ENCODE measurements at regions of chr3 and their contacts with region 1.

Region 1: DNA sequence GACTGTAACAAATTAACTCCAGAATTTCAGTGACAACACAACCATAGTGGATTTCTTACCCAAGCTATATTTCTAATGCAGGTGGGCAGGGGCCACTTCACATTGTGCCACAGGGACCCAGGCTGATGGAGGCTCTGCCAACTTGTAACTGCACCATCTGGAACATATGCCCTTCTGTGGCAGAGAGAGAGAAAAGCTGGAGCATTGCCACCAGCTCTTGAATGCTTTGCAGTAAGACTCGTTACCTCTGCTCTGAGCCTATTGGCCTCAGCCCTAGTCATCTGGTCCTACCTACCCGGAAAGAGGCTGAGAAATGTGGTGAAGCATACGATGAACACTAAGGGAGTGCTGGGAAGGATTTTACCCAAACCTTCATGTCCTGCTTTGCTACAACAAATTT is 587.1 kb downstream of the ZNF385D start:
- DNase-seq: no peak
- ATAC-seq: no peak
- H3K4me3 ChIP-seq: no peak overlapping the region
- H3K27ac ChIP-seq: no peak overlapping the region
- H3K4me1 ChIP-seq: no peaks in the 10 kb centered on the region
- H3K27me3 ChIP-seq: no peaks in the 10 kb centered on the region
- CTCF ChIP-seq: no peak

Region 2: GRCh38 chr3:21117370-21117769 is 46.6 kb before region 1 on chr3:
- intact Hi-C with region 1: loop called in 1 of 10 experiments (anchors 2 kb)
- DNase-seq: no peak
- ATAC-seq: no peak
- H3K4me3 ChIP-seq: no peak overlapping the region
- H3K27ac ChIP-seq: no peak overlapping the region
- H3K4me1 ChIP-seq: no peaks in the 10 kb centered on the region
- H3K27me3 ChIP-seq: no peaks in the 10 kb centered on the region
- CTCF ChIP-seq: no peak

Measured in heart right ventricle (tissue), 16 donors.